Mammary epithelial cell (primary cell): ENCODE measurements at regions of chr17 and their contacts with region 1.

Region 1: GRCh38 chr17:18248300-18248731 is 10.2 kb downstream of the FLII start:
- DNase-seq: peak; percentile 55
- H3K4me3 ChIP-seq: no peak overlapping the region
- H3K27ac ChIP-seq: no peak overlapping the region
- H3K4me1 ChIP-seq: peaks cover 17% of the 10 kb centered on the region
- H3K27me3 ChIP-seq: no peaks in the 10 kb centered on the region
- CTCF ChIP-seq: peak; percentile 72 to 73

Region 2: GRCh38 chr17:18198530-18198929 is 49.8 kb before region 1 on chr17:
- CTCF ChIA-PET with region 1: no interaction called
- dilution Hi-C with region 1: no loop called
- in situ Hi-C with region 1: no loop called
- intact Hi-C with region 1: no loop called
- DNase-seq: no peak
- H3K4me3 ChIP-seq: no peak overlapping the region
- H3K27ac ChIP-seq: no peak overlapping the region
- H3K4me1 ChIP-seq: peaks cover 19% of the 10 kb centered on the region
- H3K27me3 ChIP-seq: no peaks in the 10 kb centered on the region
- CTCF ChIP-seq: no peak

Region 3: GRCh38 chr17:18217412-18218015 is 30.8 kb before region 1 on chr17:
- CTCF ChIA-PET with region 1: no interaction called
- dilution Hi-C with region 1: loop called (anchors 5 kb)
- in situ Hi-C with region 1: no loop called
- intact Hi-C with region 1: loop called (anchors 1 kb)
- DNase-seq: peak; percentile 34
- H3K4me3 ChIP-seq: no peak overlapping the region
- H3K27ac ChIP-seq: no peak overlapping the region
- H3K4me1 ChIP-seq: no peaks in the 10 kb centered on the region
- H3K27me3 ChIP-seq: no peaks in the 10 kb centered on the region
- CTCF ChIP-seq: peak; percentile 96 to 98

Region 4: GRCh38 chr17:18235743-18236256 is 12.5 kb before region 1 on chr17:
- CTCF ChIA-PET with region 1: no interaction called
- dilution Hi-C with region 1: no loop called
- in situ Hi-C with region 1: no loop called
- intact Hi-C with region 1: loop called (anchors 1 kb)
- DNase-seq: peak; percentile 90
- H3K4me3 ChIP-seq: no peak overlapping the region
- H3K27ac ChIP-seq: peak overlapping the region; percentile 71
- H3K4me1 ChIP-seq: peaks cover 35% of the 10 kb centered on the region
- H3K27me3 ChIP-seq: no peaks in the 10 kb centered on the region
- CTCF ChIP-seq: no peak